ENCODE measurements at regions of chr2 and their contacts with region 1.

Region 1: GRCh38 chr2:114056294-114057143 is 166.6 kb downstream of the ACTR3 start:
- DNase-seq: no peak
- ATAC-seq: no peak
- H3K4me3 ChIP-seq: no peak overlapping the region
- H3K4me3 Mint-ChIP-seq: no peak overlapping the region
- H3K27ac ChIP-seq: no peak overlapping the region
- H3K27ac Mint-ChIP-seq: no peak overlapping the region
- H3K4me1 ChIP-seq: no peaks in the 10 kb centered on the region
- H3K4me1 Mint-ChIP-seq: no peaks in the 10 kb centered on the region
- H3K27me3 ChIP-seq: no peaks in the 10 kb centered on the region
- H3K27me3 Mint-ChIP-seq: peaks cover 33% of the 10 kb centered on the region
- CTCF ChIP-seq: no peak

Region 2: GRCh38 chr2:113672326-113672932 is 384.1 kb before region 1 on chr2:
- CTCF ChIA-PET with region 1: no interaction called
- POLR2A ChIA-PET with region 1: no interaction called
- intact Hi-C with region 1: loop called in 1 of 2 experiments (anchors 10 kb)
- DNase-seq: no peak
- ATAC-seq: no peak
- H3K4me3 ChIP-seq: no peak overlapping the region
- H3K4me3 Mint-ChIP-seq: no peak overlapping the region
- H3K27ac ChIP-seq: no peak overlapping the region
- H3K27ac Mint-ChIP-seq: no peak overlapping the region
- H3K4me1 ChIP-seq: no peaks in the 10 kb centered on the region
- H3K4me1 Mint-ChIP-seq: no peaks in the 10 kb centered on the region
- H3K27me3 ChIP-seq: no peaks in the 10 kb centered on the region
- H3K27me3 Mint-ChIP-seq: no peaks in the 10 kb centered on the region
- CTCF ChIP-seq: no peak

Region 3: GRCh38 chr2:114005110-114005783 is 51.3 kb before region 1 on chr2:
- CTCF ChIA-PET with region 1: no interaction called
- POLR2A ChIA-PET with region 1: no interaction called
- intact Hi-C with region 1: no loop called
- DNase-seq: no peak
- ATAC-seq: no peak
- H3K4me3 ChIP-seq: no peak overlapping the region
- H3K4me3 Mint-ChIP-seq: no peak overlapping the region
- H3K27ac ChIP-seq: no peak overlapping the region
- H3K27ac Mint-ChIP-seq: no peak overlapping the region
- H3K4me1 ChIP-seq: no peaks in the 10 kb centered on the region
- H3K4me1 Mint-ChIP-seq: no peaks in the 10 kb centered on the region
- H3K27me3 ChIP-seq: no peaks in the 10 kb centered on the region
- H3K27me3 Mint-ChIP-seq: peaks cover 11% of the 10 kb centered on the region
- CTCF ChIP-seq: no peak

Measured in CD8-positive, alpha-beta T cell (primary cell).